CD8-positive, alpha-beta T cell (primary cell): ENCODE measurements at regions of chr3 and their contacts with region 1.

Region 1: DNA sequence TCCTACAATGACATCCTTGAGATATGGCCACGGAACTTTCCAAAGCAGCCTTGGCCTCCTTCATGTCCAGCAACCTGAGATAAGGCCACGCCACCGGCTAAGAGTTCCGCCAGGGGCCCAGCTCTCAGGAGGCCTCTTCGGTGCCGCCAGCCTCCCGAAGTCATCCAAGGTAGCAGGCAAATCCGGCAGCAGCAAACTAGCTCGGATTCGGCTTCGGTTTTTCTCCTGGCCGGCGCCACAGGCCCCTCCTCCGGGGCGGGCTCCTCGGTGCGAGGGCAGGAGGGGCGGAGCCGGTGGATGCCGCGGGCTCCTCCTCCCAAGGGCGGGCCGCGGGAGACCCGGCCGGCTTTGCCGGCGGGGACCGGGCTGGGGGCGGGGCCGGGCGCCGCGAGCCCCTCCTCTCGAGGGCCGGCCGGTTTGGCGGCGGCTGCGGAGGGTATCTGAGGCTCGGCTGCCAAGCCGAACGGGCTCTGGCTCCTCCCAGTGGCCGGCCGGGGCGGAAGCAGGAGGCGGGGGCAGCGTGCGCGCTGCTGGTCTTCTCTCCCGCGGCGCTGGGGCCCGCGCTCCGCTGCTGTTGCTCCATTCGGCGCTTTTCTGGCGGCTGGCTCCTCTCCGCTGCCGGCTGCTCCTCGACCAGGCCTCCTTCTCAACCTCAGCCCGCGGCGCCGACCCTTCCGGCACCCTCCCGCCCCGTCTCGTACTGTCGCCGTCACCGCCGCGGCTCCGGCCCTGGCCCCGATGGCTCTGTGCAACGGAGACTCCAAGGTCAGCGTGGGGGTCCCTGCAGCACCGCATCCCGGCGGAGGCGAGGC is at the start of gene GMPS:
- DNase-seq: peak; percentile 90 to 97 (median 95)
- ATAC-seq: peak; percentile 93
- H3K4me3 ChIP-seq: peak within 1 kb of the TSS; percentile 75 to 80
- H3K4me3 Mint-ChIP-seq: peak within 1 kb of the TSS; percentile 95
- H3K27ac ChIP-seq: peak within 1 kb of the TSS; percentile 72 to 93
- H3K27ac Mint-ChIP-seq: peak within 1 kb of the TSS; percentile 95
- H3K4me1 ChIP-seq: peaks cover 24% of the 10 kb centered on the region
- H3K4me1 Mint-ChIP-seq: peaks cover 33% of the 10 kb centered on the region
- H3K27me3 ChIP-seq: no peaks in the 10 kb centered on the region
- H3K27me3 Mint-ChIP-seq: no peaks in the 10 kb centered on the region
- CTCF ChIP-seq: peak; percentile 32
- total RNA-seq, gene GMPS: 29.6 to 31.7 TPM

Region 2: GRCh38 chr3:154323891-154324738 is 1546.2 kb before region 1 on chr3 and contains the start of gene DHX36:
- CTCF ChIA-PET with region 1: no interaction called
- POLR2A ChIA-PET with region 1: no interaction called
- intact Hi-C with region 1: loop called (anchors 1 to 5 kb)
- DNase-seq: peak; percentile 85 to 97 (median 92)
- ATAC-seq: peak; percentile 81
- H3K4me3 ChIP-seq: peak within 1 kb of the TSS; percentile 64 to 76
- H3K4me3 Mint-ChIP-seq: peak within 1 kb of the TSS; percentile 96
- H3K27ac ChIP-seq: peak within 1 kb of the TSS; percentile 97
- H3K27ac Mint-ChIP-seq: peak within 1 kb of the TSS; percentile 99
- H3K4me1 ChIP-seq: peaks cover 45% of the 10 kb centered on the region
- H3K4me1 Mint-ChIP-seq: peaks cover 33% of the 10 kb centered on the region
- H3K27me3 ChIP-seq: no peaks in the 10 kb centered on the region
- H3K27me3 Mint-ChIP-seq: no peaks in the 10 kb centered on the region
- CTCF ChIP-seq: no peak
- total RNA-seq, gene DHX36: 149 to 152 TPM

Region 3: GRCh38 chr3:155744626-155745324 is 125.6 kb before region 1 on chr3 and contains the start of gene PLCH1:
- CTCF ChIA-PET with region 1: no interaction called
- POLR2A ChIA-PET with region 1: no interaction called
- intact Hi-C with region 1: loop called in 1 of 2 experiments (anchors 5 kb)
- DNase-seq: peak in 7 of 9 experiments; percentile 3 to 57 (median 47)
- ATAC-seq: peak; percentile 75
- H3K4me3 ChIP-seq: peak within 1 kb of the TSS; percentile 60 to 80
- H3K4me3 Mint-ChIP-seq: peak within 1 kb of the TSS; percentile 86
- H3K27ac ChIP-seq: no peak within 1 kb of the TSS
- H3K27ac Mint-ChIP-seq: no peak within 1 kb of the TSS
- H3K4me1 ChIP-seq: peaks cover 19% of the 10 kb centered on the region
- H3K4me1 Mint-ChIP-seq: peaks cover 17% of the 10 kb centered on the region
- H3K27me3 ChIP-seq: peaks cover 0 to 17% of the 10 kb centered on the region in 2 experiments
- H3K27me3 Mint-ChIP-seq: peaks cover 39% of the 10 kb centered on the region
- CTCF ChIP-seq: no peak
- total RNA-seq, gene PLCH1: not detected

Region 4: DNA sequence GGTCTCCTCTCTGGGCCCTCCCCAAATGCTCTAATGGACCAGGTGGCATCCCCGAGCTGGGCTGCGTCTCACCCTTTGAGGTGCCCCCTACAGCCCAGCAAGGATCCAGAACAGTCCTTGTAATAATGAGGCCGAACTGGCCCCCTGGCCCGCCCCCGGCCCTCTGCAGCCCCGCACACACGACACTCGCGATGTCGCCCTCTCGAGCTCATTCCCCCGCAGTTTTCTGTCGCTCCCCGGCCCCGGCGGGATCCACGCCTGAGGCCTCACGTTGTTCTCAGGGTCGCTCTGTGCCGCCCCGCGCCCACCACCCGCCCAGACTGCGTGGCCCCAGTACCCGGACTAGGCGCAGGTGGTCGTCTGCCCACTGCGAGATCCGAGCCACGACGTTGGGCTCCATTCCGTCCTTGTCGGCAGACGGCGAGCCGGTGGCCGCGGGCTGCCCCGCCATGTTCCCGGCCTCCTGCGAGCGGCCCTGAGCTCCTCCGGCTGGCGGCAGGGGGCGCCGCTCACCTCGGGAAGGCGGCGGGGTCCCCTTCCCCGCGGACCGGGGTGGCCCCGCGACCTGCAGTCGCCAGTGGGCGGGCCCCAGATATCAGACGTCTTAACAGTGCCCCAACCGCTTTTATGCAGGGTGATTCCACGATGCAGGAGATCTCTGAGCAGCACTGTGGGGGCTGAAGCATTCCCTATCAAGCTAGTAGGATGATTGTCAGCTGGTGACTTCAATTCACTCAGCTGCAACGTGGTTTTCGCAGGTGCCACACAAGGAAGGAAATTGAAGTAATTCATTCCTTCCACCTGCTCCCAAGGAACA is 64.3 kb before region 1 on chr3 and contains the start of gene C3orf33:
- CTCF ChIA-PET with region 1: interaction called, 43 read pairs
- POLR2A ChIA-PET with region 1: interaction called, 13 read pairs
- intact Hi-C with region 1: loop called (anchors 1 to 2 kb)
- DNase-seq: peak; percentile 53 to 88 (median 74)
- ATAC-seq: peak; percentile 95
- H3K4me3 ChIP-seq: peak within 1 kb of the TSS; percentile 87 to 89
- H3K4me3 Mint-ChIP-seq: peak within 1 kb of the TSS; percentile 85
- H3K27ac ChIP-seq: peak within 1 kb of the TSS; percentile 64 to 82
- H3K27ac Mint-ChIP-seq: peak within 1 kb of the TSS; percentile 87
- H3K4me1 ChIP-seq: peaks cover 14% of the 10 kb centered on the region
- H3K4me1 Mint-ChIP-seq: peaks cover 24% of the 10 kb centered on the region
- H3K27me3 ChIP-seq: peaks cover 0 to 3% of the 10 kb centered on the region in 2 experiments
- H3K27me3 Mint-ChIP-seq: peaks cover 11% of the 10 kb centered on the region
- CTCF ChIP-seq: peak; percentile 93
- total RNA-seq, gene C3orf33: 4.6 to 4.7 TPM

Region 5: GRCh38 chr3:155859859-155860258 is 10.5 kb before region 1 on chr3:
- CTCF ChIA-PET with region 1: interaction called, 5 read pairs
- POLR2A ChIA-PET with region 1: interaction called, 28 read pairs
- intact Hi-C with region 1: loop called in 1 of 2 experiments (anchors 1 kb)
- DNase-seq: peak in 2 of 9 experiments; percentile 33 to 43
- ATAC-seq: no peak
- H3K4me3 ChIP-seq: no peak overlapping the region
- H3K4me3 Mint-ChIP-seq: no peak overlapping the region
- H3K27ac ChIP-seq: no peak overlapping the region
- H3K27ac Mint-ChIP-seq: no peak overlapping the region
- H3K4me1 ChIP-seq: peaks cover 9% of the 10 kb centered on the region
- H3K4me1 Mint-ChIP-seq: peaks cover 13% of the 10 kb centered on the region
- H3K27me3 ChIP-seq: no peaks in the 10 kb centered on the region
- H3K27me3 Mint-ChIP-seq: no peaks in the 10 kb centered on the region
- CTCF ChIP-seq: no peak

Region 6: DNA sequence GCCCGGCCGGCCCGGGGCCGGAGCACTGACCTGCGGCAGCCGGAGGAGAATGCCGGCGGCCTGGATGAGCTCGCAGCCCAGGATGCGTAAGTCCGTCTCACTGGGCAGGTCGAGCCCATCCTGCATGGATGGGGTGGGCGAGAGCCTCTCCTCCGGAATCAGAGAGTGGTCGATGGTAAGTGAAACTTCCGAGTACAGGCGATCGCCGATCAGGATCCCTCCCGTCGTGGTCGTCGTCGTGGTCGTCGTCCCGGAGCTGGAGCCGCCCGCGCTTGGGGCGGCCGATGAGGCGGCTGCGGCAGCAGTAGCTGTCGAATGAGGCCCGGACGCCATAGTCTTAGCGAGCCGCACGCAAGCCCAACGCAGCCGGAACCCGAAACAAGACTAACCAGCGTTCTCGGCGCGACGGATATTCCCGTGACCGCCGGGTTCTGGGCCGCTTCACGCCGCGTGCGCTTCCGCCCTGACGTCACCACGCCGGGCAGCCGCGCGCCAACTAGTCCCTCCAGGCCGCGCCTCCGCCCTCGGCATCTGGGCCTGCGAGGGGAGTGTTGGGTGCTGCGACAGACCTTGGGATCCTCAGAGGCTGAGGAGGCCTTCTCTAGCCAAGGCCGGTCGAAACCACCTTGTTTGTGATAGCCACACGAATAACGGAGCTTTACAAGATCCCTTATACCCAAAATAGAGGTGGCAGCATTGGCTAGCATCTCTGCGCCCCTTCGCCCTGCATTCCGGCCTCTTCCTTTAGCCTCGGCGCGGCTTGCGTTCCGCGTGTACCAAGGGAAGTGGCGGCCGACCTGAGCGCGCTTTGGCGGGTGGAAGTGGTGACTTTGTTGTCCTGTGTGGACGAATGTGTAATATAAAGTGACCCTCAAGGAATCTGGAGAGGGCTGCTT is 1289.7 kb after region 1 on chr3 and contains the start of gene CCNL1:
- CTCF ChIA-PET with region 1: no interaction called
- POLR2A ChIA-PET with region 1: interaction called, 8 read pairs
- intact Hi-C with region 1: loop called in 1 of 2 experiments (anchors 5 kb)
- DNase-seq: peak; percentile 92 to 99 (median 95)
- ATAC-seq: peak; percentile 70
- H3K4me3 ChIP-seq: peak within 1 kb of the TSS; percentile 79 to 84
- H3K4me3 Mint-ChIP-seq: peak within 1 kb of the TSS; percentile 96
- H3K27ac ChIP-seq: peak within 1 kb of the TSS; percentile 99 to 100
- H3K27ac Mint-ChIP-seq: peak within 1 kb of the TSS; percentile 100
- H3K4me1 ChIP-seq: peaks cover 50% of the 10 kb centered on the region
- H3K4me1 Mint-ChIP-seq: peaks cover 54% of the 10 kb centered on the region
- H3K27me3 ChIP-seq: no peaks in the 10 kb centered on the region
- H3K27me3 Mint-ChIP-seq: no peaks in the 10 kb centered on the region
- CTCF ChIP-seq: no peak
- total RNA-seq, gene CCNL1: 1,161 to 1,206 TPM